ENCODE measurements at regions of chr6 and their contacts with region 1.

Region 1: DNA sequence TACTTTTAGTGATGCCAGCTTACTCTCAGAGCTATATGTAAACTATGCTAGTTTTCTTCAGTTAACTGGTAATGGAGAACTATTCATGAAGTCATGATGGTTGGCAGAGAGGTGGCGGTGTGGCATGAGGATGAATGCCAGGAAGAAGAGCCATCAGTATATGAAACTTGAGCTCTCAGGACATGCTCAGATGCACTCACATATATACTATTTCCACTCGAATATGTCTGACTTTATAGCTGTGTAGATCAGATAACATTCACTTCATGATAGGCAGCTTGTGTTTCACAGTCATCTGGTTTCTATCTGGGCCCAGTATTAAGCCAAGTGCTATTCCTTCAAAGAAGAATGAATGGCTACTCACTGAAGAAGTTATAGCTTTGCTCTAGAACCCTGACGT is 46.2 kb upstream of the CEP85L start:
- DNase-seq: peak; percentile 18 to 51 (median 38)
- H3K4me3 ChIP-seq: no peak overlapping the region
- H3K27ac ChIP-seq: no peak overlapping the region
- H3K4me1 ChIP-seq: no peaks in the 10 kb centered on the region
- H3K27me3 ChIP-seq: no peaks in the 10 kb centered on the region

Region 2: DNA sequence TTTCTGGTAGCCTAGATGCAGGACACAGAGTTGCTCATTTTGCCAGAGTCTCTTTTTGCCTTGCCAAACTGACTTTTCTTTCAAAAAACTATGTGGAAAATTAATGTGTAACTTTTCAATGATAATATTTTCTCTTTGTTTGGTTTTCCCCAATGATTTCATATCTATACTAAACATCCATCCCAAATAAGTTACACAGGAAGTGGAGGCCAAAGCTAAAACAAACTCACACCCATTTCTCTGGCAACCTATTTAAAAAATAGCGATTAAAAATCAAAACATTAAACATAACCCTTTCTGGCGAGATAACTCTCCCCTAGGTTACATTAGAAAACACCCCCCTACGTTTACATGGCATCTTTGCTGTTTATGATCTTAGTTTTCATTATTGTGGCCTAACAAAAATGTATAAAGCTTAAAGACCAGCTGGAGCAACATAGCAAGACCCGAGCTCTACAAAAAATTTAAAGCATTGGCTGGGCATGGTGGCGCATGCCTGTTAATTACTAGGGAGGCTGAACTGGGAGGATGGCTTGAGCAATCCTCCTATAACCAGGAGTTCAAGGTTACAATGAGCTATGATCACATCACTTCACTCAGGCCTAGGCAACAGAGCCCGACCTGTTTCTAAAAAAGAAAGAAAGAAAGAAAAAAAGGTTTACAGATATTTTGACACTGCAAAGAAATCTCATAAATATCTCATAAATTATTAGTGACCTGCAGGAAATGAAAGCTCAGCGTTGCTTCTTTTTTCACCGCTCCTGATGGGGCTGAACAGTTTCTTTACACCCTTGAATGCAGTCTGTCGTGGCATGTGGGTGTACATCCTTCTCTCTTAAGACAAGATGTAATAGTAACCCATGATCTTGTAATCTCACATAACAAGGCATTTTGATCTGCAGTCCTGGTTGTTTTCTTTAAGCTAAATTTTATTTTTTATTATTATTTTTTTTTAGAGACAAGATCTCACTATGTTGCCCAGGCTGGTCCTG is 13.4 kb before region 1 on chr6:
- CTCF ChIA-PET with region 1: interaction called, 10 read pairs
- POLR2A ChIA-PET with region 1: no interaction called
- DNase-seq: no peak
- H3K4me3 ChIP-seq: no peak overlapping the region
- H3K27ac ChIP-seq: no peak overlapping the region
- H3K4me1 ChIP-seq: peaks cover 0 to 6% (median 0%) of the 10 kb centered on the region in 4 experiments
- H3K27me3 ChIP-seq: no peaks in the 10 kb centered on the region

Region 3: DNA sequence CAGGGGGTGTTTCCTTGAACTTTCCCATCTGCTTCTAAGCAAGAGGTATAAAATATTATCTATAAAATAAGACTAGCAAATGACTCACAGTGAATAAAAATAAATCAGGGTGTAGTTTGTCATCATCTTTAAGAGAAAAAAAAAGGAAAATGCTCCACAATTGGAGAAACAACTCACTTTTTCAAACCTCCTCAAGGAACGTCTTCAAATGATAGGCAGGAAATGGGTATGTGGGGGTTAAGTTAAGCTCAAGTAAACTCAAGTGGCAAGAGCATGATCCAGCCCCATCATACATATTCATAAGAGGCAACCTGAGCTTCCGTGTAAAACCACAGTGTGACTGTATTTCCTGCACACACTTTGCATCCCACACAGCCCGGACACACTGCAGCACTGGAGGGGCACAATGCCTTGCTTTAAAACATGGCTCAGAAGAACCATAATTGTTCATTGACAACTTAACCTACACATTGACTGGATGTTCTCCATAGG is 12.4 kb after region 1 on chr6:
- CTCF ChIA-PET with region 1: interaction called, 17 read pairs
- POLR2A ChIA-PET with region 1: interaction called, 3 read pairs
- DNase-seq: peak; percentile 40 to 91 (median 84)
- H3K4me3 ChIP-seq: peak overlapping the region in 6 of 7 experiments; percentile 57 to 76 (median 69)
- H3K27ac ChIP-seq: peak overlapping the region in 1 of 2 experiments; percentile 84
- H3K4me1 ChIP-seq: peaks cover 19 to 61% (median 37%) of the 10 kb centered on the region in 4 experiments
- H3K27me3 ChIP-seq: no peaks in the 10 kb centered on the region

Region 4: DNA sequence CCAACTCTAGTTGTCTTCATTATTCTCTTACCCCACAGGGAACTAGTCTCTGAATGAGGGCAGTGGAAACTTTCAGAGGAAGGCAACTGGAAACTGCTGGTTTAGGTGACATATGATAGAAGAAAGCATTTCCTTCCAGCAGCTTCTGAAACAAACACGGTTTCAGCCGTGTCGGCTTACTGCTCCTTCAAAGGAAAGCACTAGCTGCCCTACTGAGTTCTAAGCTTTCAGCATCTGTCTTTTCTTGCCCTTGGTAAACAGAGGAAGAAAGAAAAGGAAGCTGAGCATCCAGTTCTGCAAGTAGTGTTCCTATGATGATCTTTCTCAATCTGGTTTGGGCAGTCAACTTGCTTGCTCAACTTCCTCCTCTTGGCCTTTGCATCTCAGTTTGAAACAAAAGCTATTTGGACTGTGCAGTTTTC is 71.4 kb after region 1 on chr6:
- CTCF ChIA-PET with region 1: interaction called, 19 read pairs
- POLR2A ChIA-PET with region 1: no interaction called
- DNase-seq: peak in 2 of 3 donors; percentile 34 to 35
- H3K4me3 ChIP-seq: peak overlapping the region in 1 of 7 experiments; percentile 6
- H3K27ac ChIP-seq: no peak overlapping the region
- H3K4me1 ChIP-seq: peaks cover 0 to 20% (median 7%) of the 10 kb centered on the region in 4 experiments
- H3K27me3 ChIP-seq: no peaks in the 10 kb centered on the region

Region 5: DNA sequence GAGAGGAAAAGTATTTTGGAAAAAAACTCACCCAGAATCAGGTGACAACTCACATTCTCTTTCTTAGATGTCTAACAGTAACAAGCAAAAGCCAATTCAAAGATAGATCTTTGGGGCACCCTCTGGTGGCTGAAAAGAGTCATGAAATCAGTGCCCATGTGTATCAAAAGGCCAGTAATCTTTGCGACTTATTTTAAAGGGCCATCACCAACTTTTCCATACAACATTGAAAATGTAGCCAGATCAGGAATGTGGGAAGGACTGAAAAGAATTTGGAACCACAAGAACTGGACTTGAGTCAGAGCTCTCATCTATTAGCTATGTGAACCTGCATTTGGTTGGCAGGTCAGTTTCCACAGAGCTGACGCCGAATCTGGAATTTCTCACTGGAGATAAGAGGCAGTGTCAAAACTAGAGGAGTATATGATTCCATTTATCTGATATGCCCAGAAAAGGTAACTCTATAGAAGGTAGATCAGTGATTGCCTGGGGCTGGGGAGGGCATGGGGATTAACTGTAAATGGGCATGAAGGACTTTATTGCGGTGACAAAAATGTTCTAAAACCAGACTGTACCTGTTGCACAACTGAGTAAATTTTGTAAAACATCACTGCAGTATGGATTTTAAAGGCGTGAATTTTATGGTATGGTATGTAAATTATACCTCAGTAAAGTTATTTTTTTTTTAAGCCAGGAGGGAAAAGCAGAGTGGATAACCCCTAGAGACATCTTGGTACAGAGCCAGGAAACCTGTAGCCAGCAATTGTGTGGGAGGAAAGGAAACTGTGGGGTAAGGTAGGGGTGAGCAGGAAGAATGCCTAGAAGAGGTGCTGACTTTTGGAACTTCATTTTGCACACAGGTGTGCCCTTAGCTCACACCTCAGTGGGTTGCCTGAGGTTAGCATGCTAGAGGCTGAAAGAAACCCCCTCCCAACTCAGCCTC is 79.3 kb after region 1 on chr6:
- CTCF ChIA-PET with region 1: interaction called, 19 read pairs
- POLR2A ChIA-PET with region 1: no interaction called
- DNase-seq: peak; percentile 77 to 86 (median 82)
- H3K4me3 ChIP-seq: no peak overlapping the region
- H3K27ac ChIP-seq: no peak overlapping the region
- H3K4me1 ChIP-seq: peaks cover 0 to 9% (median 3%) of the 10 kb centered on the region in 4 experiments
- H3K27me3 ChIP-seq: no peaks in the 10 kb centered on the region

Measured in common myeloid progenitor, CD34-positive (primary cell).